T-cell (primary cell): ENCODE measurements at regions of chr19 and their contacts with region 1.

Region 1: DNA sequence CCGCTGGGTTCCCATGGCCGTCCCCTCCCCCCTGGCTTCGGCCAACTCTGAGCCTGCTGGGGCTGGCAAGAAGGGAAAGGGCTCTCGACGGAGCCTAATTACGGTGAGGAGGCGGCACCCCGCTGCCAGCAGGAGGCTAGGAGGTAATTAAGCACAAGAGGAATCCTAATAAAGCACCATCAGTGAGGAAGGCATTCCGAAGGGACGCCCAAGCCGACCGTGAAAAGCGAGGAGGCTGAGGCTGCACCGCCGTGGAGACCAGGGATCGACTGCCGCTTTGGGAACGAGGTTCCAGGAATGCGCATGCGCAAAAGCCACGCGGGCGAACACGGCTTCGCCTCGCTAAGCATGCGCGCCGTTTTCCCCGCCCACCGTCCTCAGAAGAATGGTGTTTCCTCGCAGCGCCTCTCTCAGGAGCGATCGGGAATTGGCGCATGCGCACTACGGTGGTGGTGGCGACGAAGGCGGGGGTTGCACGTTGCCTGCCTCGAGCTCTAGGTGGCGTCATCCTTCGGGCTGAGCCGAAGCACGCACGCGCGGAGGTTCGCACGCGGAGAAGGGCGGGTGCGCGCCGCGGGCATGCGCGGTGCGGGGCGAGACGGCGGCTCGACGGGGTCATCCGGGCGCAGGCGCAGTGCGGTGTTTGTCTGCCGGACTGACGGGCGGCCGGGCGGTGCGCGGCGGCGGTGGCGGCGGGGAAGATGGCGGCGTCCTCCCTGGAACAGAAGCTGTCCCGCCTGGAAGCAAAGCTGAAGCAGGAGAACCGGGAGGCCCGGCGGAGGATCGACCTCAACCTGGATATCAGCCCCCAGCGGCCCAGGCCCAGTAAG is at the start of gene MAP2K7:
- DNase-seq: peak; percentile 98 to 100 (median 100)
- ATAC-seq: peak; percentile 85 to 92 (median 90)
- H3K4me3 ChIP-seq: peak within 1 kb of the TSS; percentile 77 to 82
- H3K4me3 Mint-ChIP-seq: peak within 1 kb of the TSS; percentile 83 to 88 (median 87)
- H3K27ac ChIP-seq: peak within 1 kb of the TSS; percentile 84
- H3K27ac Mint-ChIP-seq: peak within 1 kb of the TSS; percentile 87 to 90
- H3K4me1 ChIP-seq: peaks cover 6 to 49% of the 10 kb centered on the region in 2 experiments
- H3K4me1 Mint-ChIP-seq: peaks cover 27 to 32% (median 31%) of the 10 kb centered on the region in 3 donors
- H3K27me3 ChIP-seq: peaks cover 0 to 11% of the 10 kb centered on the region in 2 experiments
- H3K27me3 Mint-ChIP-seq: no peaks in the 10 kb centered on the region
- total RNA-seq, gene MAP2K7: 68.1 to 93.1 (median 73.5) TPM

Region 2: DNA sequence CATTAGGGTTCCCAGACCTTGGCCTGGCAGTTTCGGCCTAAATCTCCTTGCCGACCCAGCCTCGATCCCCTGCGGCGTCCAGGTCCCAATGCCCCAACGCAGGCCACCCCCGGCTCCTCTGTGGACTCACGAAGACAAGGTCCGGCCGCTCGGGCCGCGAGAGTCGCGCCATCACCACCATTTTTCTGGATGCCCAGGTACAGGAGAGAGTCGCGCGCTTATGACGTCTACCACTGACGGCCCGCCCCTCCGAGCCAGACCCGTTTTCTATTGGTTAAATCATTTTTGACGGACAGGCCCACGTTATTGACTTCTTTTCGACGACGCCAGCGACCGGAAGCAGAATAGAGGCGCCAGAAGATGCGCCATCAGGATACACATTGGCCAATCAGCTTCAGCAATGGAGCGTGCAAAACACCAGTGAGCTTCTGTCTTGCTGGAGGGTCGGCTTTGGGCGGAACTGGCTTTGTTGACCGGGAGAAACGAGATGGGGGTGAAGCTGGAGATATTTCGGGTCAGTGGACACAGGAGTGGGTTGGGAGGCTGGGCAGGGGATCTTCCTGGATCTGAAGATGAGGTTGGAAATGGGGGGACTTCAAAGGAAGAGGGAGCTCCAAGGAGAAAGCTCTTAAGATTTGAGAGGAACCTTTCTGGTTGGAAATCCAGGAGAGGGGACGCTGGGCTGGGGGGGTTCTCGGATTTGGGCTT is 274.0 kb before region 1 on chr19 and contains the starts of genes PET100 and XAB2:
- CTCF ChIA-PET with region 1: interaction called in 1 of 2 experiments, 15 read pairs
- POLR2A ChIA-PET with region 1: interaction called in 1 of 2 experiments, 3 read pairs
- DNase-seq: peak; percentile 87 to 98 (median 94)
- ATAC-seq: peak; percentile 92 to 98 (median 96)
- H3K4me3 ChIP-seq: peak within 1 kb of the TSS; percentile 90 to 99
- H3K4me3 Mint-ChIP-seq: peak within 1 kb of the TSS; percentile 90 to 99 (median 96)
- H3K27ac ChIP-seq: peak within 1 kb of the TSS; percentile 86
- H3K27ac Mint-ChIP-seq: peak within 1 kb of the TSS; percentile 98
- H3K4me1 ChIP-seq: peaks cover 13 to 45% of the 10 kb centered on the region in 2 experiments
- H3K4me1 Mint-ChIP-seq: peaks cover 39 to 48% (median 45%) of the 10 kb centered on the region in 3 donors
- H3K27me3 ChIP-seq: no peaks in the 10 kb centered on the region
- H3K27me3 Mint-ChIP-seq: no peaks in the 10 kb centered on the region
- total RNA-seq, gene PET100: 105 to 139 (median 110) TPM
- total RNA-seq, gene XAB2: 59.9 to 82.6 (median 78.1) TPM

Region 3: GRCh38 chr19:7868676-7869452 is 34.6 kb before region 1 on chr19:
- CTCF ChIA-PET with region 1: interaction called in 1 of 2 experiments, 18 read pairs
- POLR2A ChIA-PET with region 1: interaction called in 1 of 2 experiments, 3 read pairs
- DNase-seq: peak; percentile 70 to 96 (median 82)
- ATAC-seq: peak; percentile 74 to 85 (median 83)
- H3K4me3 ChIP-seq: peak overlapping the region; percentile 58 to 59
- H3K4me3 Mint-ChIP-seq: peak overlapping the region; percentile 75 to 80 (median 76)
- H3K27ac ChIP-seq: peak overlapping the region; percentile 76
- H3K27ac Mint-ChIP-seq: peak overlapping the region; percentile 23 to 88
- H3K4me1 ChIP-seq: peaks cover 3 to 65% of the 10 kb centered on the region in 2 experiments
- H3K4me1 Mint-ChIP-seq: peaks cover 35 to 48% (median 37%) of the 10 kb centered on the region in 3 donors
- H3K27me3 ChIP-seq: peaks cover 0 to 75% of the 10 kb centered on the region in 2 experiments
- H3K27me3 Mint-ChIP-seq: peaks cover 17 to 24% of the 10 kb centered on the region in 2 donors

Region 4: GRCh38 chr19:7919610-7920518 is 16.4 kb after region 1 on chr19 and contains the start of gene SNAPC2:
- CTCF ChIA-PET with region 1: interaction called in 1 of 2 experiments, 28 read pairs
- POLR2A ChIA-PET with region 1: interaction called in 1 of 2 experiments, 9 read pairs
- DNase-seq: peak; percentile 91 to 98 (median 96)
- ATAC-seq: peak; percentile 69 to 71 (median 70)
- H3K4me3 ChIP-seq: peak within 1 kb of the TSS; percentile 57
- H3K4me3 Mint-ChIP-seq: peak within 1 kb of the TSS; percentile 86 to 94 (median 88)
- H3K27ac ChIP-seq: peak within 1 kb of the TSS; percentile 72
- H3K27ac Mint-ChIP-seq: peak within 1 kb of the TSS; percentile 91 to 94
- H3K4me1 ChIP-seq: peaks cover 17 to 68% of the 10 kb centered on the region in 2 experiments
- H3K4me1 Mint-ChIP-seq: peaks cover 29 to 53% (median 35%) of the 10 kb centered on the region in 3 donors
- H3K27me3 ChIP-seq: peaks cover 3 to 45% of the 10 kb centered on the region in 2 experiments
- H3K27me3 Mint-ChIP-seq: peaks cover 10 to 31% of the 10 kb centered on the region in 2 donors
- total RNA-seq, gene SNAPC2: 9.0 to 22.9 (median 18.6) TPM

Region 5: GRCh38 chr19:7986321-7987083 is 83.0 kb after region 1 on chr19:
- CTCF ChIA-PET with region 1: no interaction called
- POLR2A ChIA-PET with region 1: no interaction called
- DNase-seq: no peak
- ATAC-seq: no peak
- H3K4me3 ChIP-seq: no peak overlapping the region
- H3K4me3 Mint-ChIP-seq: no peak overlapping the region
- H3K27ac ChIP-seq: no peak overlapping the region
- H3K27ac Mint-ChIP-seq: no peak overlapping the region
- H3K4me1 ChIP-seq: no peaks in the 10 kb centered on the region
- H3K4me1 Mint-ChIP-seq: peaks cover 2 to 19% (median 7%) of the 10 kb centered on the region in 3 donors
- H3K27me3 ChIP-seq: no peaks in the 10 kb centered on the region
- H3K27me3 Mint-ChIP-seq: no peaks in the 10 kb centered on the region